Aorta (tissue), 5 donors: ENCODE measurements at regions of chrX and their contacts with region 1.

Region 1: GRCh38 chrX:131812836-131813825 is 210.0 kb upstream of the STK26 start:
- DNase-seq: peak; percentile 84 to 86
- ATAC-seq: peak; percentile 92
- H3K4me3 ChIP-seq: peak overlapping the region in 1 of 2 donors; percentile 46
- H3K27ac ChIP-seq: no peak overlapping the region
- H3K4me1 ChIP-seq: no peaks in the 10 kb centered on the region
- H3K27me3 ChIP-seq: no peaks in the 10 kb centered on the region

Region 2: GRCh38 chrX:131710431-131711045 is 102.6 kb before region 1 on chrX:
- intact Hi-C with region 1: loop called in 1 of 2 experiments (anchors 5 kb)
- DNase-seq: no peak
- ATAC-seq: no peak
- H3K4me3 ChIP-seq: no peak overlapping the region
- H3K27ac ChIP-seq: no peak overlapping the region
- H3K4me1 ChIP-seq: no peaks in the 10 kb centered on the region
- H3K27me3 ChIP-seq: no peaks in the 10 kb centered on the region

Region 3: DNA sequence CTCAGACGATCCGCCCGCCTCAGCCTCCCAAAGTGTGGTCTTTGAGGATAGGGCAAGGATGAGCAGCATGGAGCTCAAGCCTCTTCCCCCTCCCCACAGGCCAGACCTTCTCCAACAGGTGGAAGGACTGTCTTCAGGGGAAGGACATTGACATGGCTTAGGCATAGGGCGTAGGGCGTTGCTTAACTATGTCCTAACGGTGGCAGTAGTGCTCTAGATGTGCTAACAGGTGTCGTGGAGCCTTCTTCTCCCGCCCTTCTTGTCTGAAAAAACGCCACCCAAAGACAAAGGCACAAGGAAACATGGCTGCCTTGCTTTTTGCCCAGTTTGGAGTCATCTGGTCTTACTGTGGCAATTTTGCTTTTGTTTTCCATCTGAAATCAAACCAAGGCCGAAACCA is 49.5 kb before region 1 on chrX:
- intact Hi-C with region 1: no loop called
- DNase-seq: peak in 1 of 2 donors; percentile 77
- ATAC-seq: peak; percentile 86
- H3K4me3 ChIP-seq: peak overlapping the region in 1 of 2 donors; percentile 4
- H3K27ac ChIP-seq: no peak overlapping the region
- H3K4me1 ChIP-seq: no peaks in the 10 kb centered on the region
- H3K27me3 ChIP-seq: no peaks in the 10 kb centered on the region

Region 4: DNA sequence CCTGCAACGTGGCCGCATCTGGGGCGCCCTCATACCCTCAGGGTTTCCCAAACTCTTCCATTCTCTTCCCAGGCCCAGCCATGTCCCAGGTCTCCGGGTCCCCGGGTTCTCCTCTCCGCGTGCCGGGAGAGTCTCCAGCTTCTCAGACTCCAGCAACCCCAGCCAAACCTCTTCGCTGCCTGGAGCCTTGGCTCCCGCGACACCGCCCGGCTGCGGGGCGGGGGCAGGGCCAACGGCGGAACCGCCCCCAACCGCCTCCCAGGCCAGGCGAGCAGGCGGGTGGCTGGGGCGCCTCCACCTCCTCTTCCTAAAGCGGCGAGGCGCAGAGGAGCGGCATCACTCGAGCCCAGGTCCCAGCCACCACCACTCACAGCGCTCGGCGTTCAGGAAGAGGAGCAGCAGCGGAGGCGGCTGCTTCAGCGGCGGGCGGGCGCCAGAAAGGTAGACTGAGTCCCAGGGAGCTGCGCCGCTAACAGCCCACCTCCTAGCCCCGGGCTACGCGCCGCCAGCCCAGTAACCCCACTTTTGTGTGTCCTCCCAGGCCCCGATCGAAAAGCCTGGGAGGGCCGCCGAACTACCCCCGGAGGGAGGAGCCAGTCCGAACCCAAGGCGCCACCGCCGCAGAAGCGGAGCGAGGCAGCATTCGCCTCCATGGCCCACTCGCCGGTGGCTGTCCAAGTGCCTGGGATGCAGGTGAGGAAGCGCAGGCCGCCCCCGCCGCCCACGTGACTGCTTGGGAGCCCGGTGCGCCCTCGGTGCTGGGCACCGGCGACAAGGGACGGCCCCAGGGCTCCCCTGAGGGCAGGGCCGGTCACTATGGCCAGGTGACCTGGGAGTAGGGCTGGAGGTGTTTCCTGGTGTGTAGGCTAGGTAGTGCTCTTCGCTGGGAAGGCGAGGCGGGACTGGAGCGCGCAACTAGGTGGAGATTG is 210.1 kb after region 1 on chrX and contains the start of gene STK26:
- intact Hi-C with region 1: no loop called
- DNase-seq: peak; percentile 82 to 90
- ATAC-seq: peak; percentile 93
- H3K4me3 ChIP-seq: peak within 1 kb of the TSS; percentile 49 to 71
- H3K27ac ChIP-seq: peak within 1 kb of the TSS in 1 of 2 donors; percentile 30
- H3K4me1 ChIP-seq: no peaks in the 10 kb centered on the region
- H3K27me3 ChIP-seq: peaks cover 0 to 3% of the 10 kb centered on the region in 2 donors
- total RNA-seq, gene STK26: 6.5 to 10.5 TPM